Naive thymus-derived CD8-positive, alpha-beta T cell (primary cell): ENCODE measurements at regions of chr7 and their contacts with region 1.

Region 1: DNA sequence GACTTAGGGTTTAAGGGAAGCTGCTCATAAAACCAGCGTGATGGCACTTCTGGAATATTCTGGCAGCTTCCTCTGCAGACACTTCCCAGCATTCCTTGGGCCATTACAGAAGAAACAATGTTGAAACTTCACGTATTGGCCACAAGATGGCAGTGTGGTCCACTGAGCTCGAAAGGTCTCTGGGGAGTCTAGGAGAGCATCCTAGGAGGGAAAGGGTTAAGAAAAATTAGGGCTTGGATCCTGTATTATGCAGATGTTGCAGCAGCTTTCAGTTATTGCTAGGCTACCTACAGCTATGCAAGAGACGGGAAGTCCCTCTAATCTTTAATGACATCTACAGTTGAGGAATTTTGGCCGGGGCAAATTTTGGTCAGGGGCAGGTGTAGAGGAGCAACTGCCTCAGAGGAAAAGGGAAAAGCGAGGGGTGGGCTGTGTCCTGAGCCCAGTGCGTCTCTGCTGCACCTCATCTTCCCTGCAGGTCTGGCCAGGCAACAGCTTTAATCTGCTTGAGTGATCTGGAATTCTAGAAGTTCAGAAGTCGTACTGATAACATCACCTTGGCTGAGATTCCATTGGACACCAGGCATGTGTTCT is 220.7 kb upstream of the PRSS58 start:
- DNase-seq: peak in 2 of 10 donors; percentile 30 to 33
- ATAC-seq: peak in 1 of 2 donors; percentile 28
- H3K4me3 Mint-ChIP-seq: peak overlapping the region in 9 of 10 donors; percentile 28 to 85 (median 62)
- H3K27ac Mint-ChIP-seq: peak overlapping the region; percentile 75 to 97 (median 90)
- H3K4me1 Mint-ChIP-seq: peaks cover 45 to 83% (median 83%) of the 10 kb centered on the region in 4 donors
- H3K27me3 Mint-ChIP-seq: no peaks in the 10 kb centered on the region

Region 2: DNA sequence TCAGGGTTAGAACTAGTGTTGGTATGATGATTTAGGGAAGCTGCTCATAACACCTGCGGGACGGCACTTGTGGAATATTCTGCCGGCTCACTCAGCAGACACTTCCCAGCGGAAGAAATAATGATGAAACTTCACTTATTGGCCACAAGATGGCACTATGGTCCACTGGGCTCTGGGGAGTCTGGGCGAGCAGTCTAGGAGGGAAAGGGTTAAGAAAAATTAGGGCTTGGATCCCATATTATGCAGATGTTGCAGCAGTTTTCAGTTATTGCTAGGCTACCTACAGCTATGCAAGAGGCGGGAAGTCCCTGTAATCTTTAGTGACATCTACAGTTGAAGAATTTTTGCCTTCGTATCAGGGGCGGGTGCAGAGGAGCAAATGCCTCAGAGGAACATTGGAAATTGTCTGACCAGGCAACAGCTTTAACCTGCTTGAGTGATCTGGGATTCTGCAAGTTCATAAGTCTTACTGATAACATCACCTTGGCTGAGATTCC is 18.0 kb after region 1 on chr7:
- POLR2A ChIA-PET with region 1: interaction called, 10 read pairs
- DNase-seq: peak in 5 of 10 donors; percentile 10 to 42 (median 34)
- ATAC-seq: peak; percentile 27 to 43
- H3K4me3 Mint-ChIP-seq: peak overlapping the region in 9 of 10 donors; percentile 23 to 81 (median 65)
- H3K27ac Mint-ChIP-seq: peak overlapping the region; percentile 51 to 88 (median 72)
- H3K4me1 Mint-ChIP-seq: peaks cover 24 to 59% (median 39%) of the 10 kb centered on the region in 4 donors
- H3K27me3 Mint-ChIP-seq: no peaks in the 10 kb centered on the region